Heart right ventricle (tissue), 16 donors: ENCODE measurements at regions of chr1 and their contacts with region 1.

Region 1: GRCh38 chr1:41380979-41381691 is 19.9 kb downstream of the FOXO6 start:
- DNase-seq: peak in 1 of 2 donors; percentile 66
- ATAC-seq: peak in 6 of 8 donors; percentile 2 to 34 (median 32)
- H3K4me3 ChIP-seq: peak overlapping the region; percentile 1 to 62 (median 58)
- H3K27ac ChIP-seq: peak overlapping the region in 9 of 10 donors; percentile 53 to 91 (median 82)
- H3K4me1 ChIP-seq: peaks cover 0 to 40% (median 22%) of the 10 kb centered on the region in 9 donors
- H3K27me3 ChIP-seq: peaks cover 0 to 62% (median 5%) of the 10 kb centered on the region in 7 donors
- CTCF ChIP-seq: no peak

Region 2: DNA sequence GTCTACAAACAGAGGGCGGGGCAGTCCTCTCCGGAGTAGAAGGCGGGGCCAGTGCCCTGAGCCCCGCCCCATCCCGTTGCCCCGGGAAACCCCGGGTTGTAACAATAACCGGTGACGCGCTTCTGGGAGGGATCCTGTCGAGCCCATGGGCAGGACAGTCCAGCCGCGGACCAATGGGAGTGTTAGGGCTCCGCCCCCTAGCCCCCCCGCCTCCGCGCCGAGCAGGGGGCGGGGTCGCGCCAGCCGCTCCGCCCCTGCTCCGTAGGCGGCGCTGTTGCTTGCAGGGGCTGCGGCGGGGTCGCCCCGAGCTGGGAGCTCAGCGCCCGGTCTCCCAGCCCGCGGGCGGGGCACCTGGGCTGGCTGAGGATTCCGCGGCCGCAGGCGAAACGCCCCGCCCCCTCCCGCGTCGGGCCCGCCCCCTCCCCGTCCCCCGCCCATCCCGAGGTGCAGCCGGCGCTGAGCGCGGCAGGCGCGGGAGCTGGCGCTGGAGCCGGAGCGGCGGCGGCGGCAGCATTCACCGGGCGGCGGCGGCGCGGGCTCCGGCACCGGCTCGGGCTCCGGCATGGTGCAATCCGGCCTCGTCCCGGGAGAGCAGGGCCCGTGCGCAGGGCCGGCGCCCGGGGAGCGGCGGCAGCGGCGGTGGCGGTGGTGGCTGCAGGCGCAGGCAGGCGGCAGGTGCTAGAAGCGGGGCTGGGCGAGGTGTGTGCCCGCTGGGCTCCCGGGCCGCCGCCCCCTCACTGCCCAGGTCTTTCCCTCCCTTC is 20.0 kb before region 1 on chr1 and contains the start of gene FOXO6:
- intact Hi-C with region 1: loop called in 1 of 10 experiments (anchors 1 kb)
- DNase-seq: peak; percentile 98
- ATAC-seq: peak; percentile 90 to 98 (median 95)
- H3K4me3 ChIP-seq: peak within 1 kb of the TSS; percentile 52 to 82 (median 64)
- H3K27ac ChIP-seq: peak within 1 kb of the TSS in 6 of 10 donors; percentile 40 to 69 (median 57)
- H3K4me1 ChIP-seq: peaks cover 19 to 75% (median 44%) of the 10 kb centered on the region in 9 donors
- H3K27me3 ChIP-seq: peaks cover 0 to 57% (median 18%) of the 10 kb centered on the region in 7 donors
- CTCF ChIP-seq: peak; percentile 12 to 77 (median 60)
- total RNA-seq, gene FOXO6: 0.30 to 2.6 (median 1.4) TPM